K562 (cell line): ENCODE measurements at regions of chr19 and their contacts with region 1.

Region 1: DNA sequence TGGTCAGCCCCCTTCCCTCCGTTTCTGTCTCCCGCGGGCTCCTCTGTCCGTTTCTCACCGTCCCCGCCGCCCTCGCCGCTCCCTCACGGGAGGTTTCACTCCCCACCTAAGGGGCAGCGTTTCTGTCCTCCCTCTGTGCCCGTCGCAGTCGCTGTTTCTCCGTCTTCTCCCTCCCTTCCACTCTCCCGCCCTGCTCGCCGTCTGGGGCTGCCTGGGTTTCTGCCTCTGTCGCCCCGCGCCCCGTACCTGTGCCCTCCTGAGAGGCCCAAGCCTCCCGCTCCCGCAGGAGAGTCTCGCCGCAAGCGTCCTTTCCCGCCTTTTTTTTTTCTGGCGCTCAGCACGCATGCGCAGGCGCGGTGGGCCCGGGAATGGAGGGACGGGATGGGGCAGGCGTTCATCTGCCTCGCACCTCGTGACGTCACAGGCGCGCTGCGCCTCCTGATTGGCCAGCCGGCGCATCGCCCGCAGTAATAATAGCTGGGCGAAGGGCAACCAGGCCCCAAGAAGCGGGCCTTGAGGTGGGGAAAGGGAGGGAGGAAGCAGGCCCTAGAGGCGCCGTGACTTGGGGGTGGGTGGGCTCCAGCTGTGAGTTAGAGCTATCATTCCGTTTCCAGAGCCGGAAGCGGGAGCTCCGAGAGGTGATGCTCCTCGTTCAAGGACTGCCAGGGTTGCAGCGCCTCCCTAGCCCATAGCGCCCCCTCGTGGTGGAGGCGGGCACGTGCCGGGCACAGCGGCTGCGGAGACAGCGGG is 15.4 kb downstream of the SSC5D start:
- DNase-seq: peak; percentile 95 to 98 (median 98)
- ATAC-seq: peak; percentile 96
- H3K4me3 ChIP-seq: peak overlapping the region; percentile 27; the same call in 1 of the 2 replicates
- H3K27ac ChIP-seq: peak overlapping the region; percentile 61; the same call in 2 of the 3 replicates
- H3K4me1 ChIP-seq: peaks cover 12 to 29% of the 10 kb centered on the region in 2 experiments
- H3K27me3 ChIP-seq: no peaks in the 10 kb centered on the region; a peak in 1 of 5 replicates
- CTCF ChIP-seq: peak; percentile 91 to 95 (median 95)
- EP300 ChIP-seq: no peak
- POLR2A ChIP-seq: no peak
- RAD21 ChIP-seq: peak; percentile 93 to 95

Region 2: DNA sequence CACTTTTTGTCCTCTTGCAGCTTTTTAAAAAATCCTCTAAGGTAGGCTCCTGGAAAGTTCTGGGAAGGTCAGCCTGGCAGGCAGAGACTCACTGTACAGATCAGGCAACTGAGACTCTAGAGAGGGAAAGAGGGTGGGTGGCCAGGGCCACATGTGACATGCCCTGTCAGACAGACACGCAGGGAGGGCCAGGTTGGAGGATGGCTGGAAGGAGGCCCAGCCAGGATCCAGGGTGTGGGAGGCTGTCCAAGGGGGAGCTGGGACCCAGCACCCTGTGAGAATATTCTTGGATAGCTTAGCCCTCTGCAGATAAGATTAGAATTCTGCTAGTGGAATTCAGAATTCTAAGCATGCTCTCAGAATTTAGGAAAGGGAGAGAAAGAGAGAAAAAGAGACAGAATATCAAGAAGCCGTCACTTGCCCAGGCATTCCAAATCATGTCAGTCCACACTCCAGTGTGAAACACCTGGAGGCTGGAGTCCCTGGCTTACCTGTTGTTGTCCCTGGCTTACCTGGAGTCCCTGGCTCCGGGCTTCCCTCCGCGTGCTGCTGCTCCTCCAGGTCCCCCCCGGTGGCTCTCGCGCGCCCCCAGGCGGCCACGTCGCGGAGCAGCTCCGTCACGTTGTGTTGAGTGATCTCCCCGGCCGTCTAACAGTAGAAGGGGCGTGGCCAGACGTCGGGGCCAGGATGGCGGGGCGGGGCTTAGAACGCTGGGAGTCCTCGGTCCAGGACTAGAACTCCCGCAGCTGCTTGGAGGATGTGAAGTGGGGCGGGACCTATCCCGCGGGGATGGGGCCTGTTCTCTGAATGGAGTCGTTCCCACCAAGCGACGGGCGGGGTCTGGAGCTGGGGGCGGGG is 343.3 kb before region 1 on chr19:
- CTCF ChIA-PET with region 1: no interaction called
- POLR2A ChIA-PET with region 1: no interaction called
- in situ Hi-C with region 1: no loop called
- intact Hi-C with region 1: loop called (anchors 10 kb)
- DNase-seq: peak; percentile 92 to 98 (median 92)
- ATAC-seq: peak; percentile 75
- H3K4me3 ChIP-seq: peak overlapping the region; percentile 42
- H3K27ac ChIP-seq: peak overlapping the region; percentile 66
- H3K4me1 ChIP-seq: peaks cover 34 to 69% of the 10 kb centered on the region in 2 experiments
- H3K27me3 ChIP-seq: no peaks in the 10 kb centered on the region
- CTCF ChIP-seq: peak; percentile 97 to 98 (median 97)
- EP300 ChIP-seq: peak; percentile 32; the same call in 1 of the 2 replicates
- POLR2A ChIP-seq: no peak
- RAD21 ChIP-seq: peak; percentile 93 to 97

Region 3: GRCh38 chr19:55467236-55468053 is 36.2 kb before region 1 on chr19:
- CTCF ChIA-PET with region 1: no interaction called
- POLR2A ChIA-PET with region 1: interaction called, 4 read pairs
- in situ Hi-C with region 1: no loop called
- intact Hi-C with region 1: loop called (anchors 2 kb)
- DNase-seq: peak; percentile 77 to 86 (median 83)
- ATAC-seq: peak; percentile 97
- H3K4me3 ChIP-seq: no peak overlapping the region
- H3K27ac ChIP-seq: peak overlapping the region; percentile 91
- H3K4me1 ChIP-seq: peaks cover 23 to 58% of the 10 kb centered on the region in 2 experiments; a peak in 4 of 5 replicates
- H3K27me3 ChIP-seq: no peaks in the 10 kb centered on the region
- CTCF ChIP-seq: peak; percentile 93 to 99 (median 95)
- EP300 ChIP-seq: peak; percentile 91
- POLR2A ChIP-seq: no peak; the same call in 1 of the 2 replicates
- RAD21 ChIP-seq: peak; percentile 55 to 72

Region 4: GRCh38 chr19:55599468-55600279 is 96.0 kb after region 1 on chr19 and contains the start of gene FIZ1:
- CTCF ChIA-PET with region 1: no interaction called
- POLR2A ChIA-PET with region 1: no interaction called
- in situ Hi-C with region 1: no loop called
- intact Hi-C with region 1: no loop called
- DNase-seq: peak; percentile 72 to 99 (median 83)
- ATAC-seq: peak; percentile 90
- H3K4me3 ChIP-seq: peak within 1 kb of the TSS; percentile 60
- H3K27ac ChIP-seq: peak within 1 kb of the TSS; percentile 100
- H3K4me1 ChIP-seq: peaks cover 24 to 38% of the 10 kb centered on the region in 2 experiments; a peak in 4 of 5 replicates
- H3K27me3 ChIP-seq: no peaks in the 10 kb centered on the region
- CTCF ChIP-seq: no peak
- EP300 ChIP-seq: peak; percentile 21; the same call in 1 of the 2 replicates
- POLR2A ChIP-seq: peak; percentile 77
- RAD21 ChIP-seq: no peak
- polyA plus RNA-seq, gene FIZ1: 0.79 to 0.81 TPM